ENCODE measurements at regions of chr17 and their contacts with region 1.

Region 1: GRCh38 chr17:12983991-12984884 is 33.6 kb downstream of the ELAC2 start:
- DNase-seq: peak in 1 of 2 donors; percentile 84
- H3K4me3 ChIP-seq: peak overlapping the region in 1 of 2 donors; percentile 26
- H3K27ac ChIP-seq: peak overlapping the region; percentile 9 to 44
- H3K4me1 ChIP-seq: peaks cover 0 to 29% (median 19%) of the 10 kb centered on the region in 4 donors
- H3K27me3 ChIP-seq: no peaks in the 10 kb centered on the region
- CTCF ChIP-seq: no peak

Region 2: GRCh38 chr17:12693640-12694039 is 290.6 kb before region 1 on chr17:
- intact Hi-C with region 1: no loop called
- DNase-seq: no peak
- H3K4me3 ChIP-seq: no peak overlapping the region
- H3K27ac ChIP-seq: peak overlapping the region; percentile 87 to 92
- H3K4me1 ChIP-seq: peaks cover 0 to 60% (median 7%) of the 10 kb centered on the region in 4 donors
- H3K27me3 ChIP-seq: no peaks in the 10 kb centered on the region
- CTCF ChIP-seq: no peak

Region 3: DNA sequence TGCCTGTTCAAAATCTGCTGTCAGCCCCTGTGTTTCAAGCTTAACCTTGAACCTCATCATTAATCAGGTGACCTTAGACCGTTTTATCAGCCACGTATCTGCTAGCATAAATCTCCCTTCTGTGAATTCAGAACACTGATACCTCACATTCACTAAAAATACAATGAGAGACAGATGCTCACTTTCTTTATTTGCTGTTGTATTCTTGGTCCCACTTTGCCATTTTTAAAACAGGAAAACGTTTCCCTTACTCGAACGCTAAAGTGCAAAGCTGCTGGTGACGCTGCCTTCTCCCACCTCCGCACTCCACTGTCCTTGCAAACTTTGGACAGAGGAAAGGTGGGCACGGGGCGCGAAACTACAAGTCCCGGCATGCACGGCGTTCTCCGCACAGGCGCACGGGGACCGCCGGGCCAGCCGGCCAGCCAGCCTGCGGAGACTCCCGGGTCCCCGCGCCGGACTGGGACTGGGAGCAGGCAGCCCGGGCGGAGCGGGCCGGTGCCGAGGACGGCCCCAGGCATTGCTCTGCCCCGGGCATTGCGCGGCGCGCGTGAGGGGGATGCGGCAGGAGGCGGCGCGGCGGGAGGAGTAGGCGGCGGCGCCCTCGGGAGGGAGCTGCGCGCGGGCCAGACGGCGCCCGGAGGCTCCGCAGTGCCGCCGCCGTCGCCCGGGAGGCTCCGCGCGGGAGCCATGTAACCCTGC is 195.0 kb before region 1 on chr17 and contains the start of gene ARHGAP44:
- intact Hi-C with region 1: loop called (anchors 10 kb)
- DNase-seq: peak; percentile 44 to 73
- H3K4me3 ChIP-seq: peak within 1 kb of the TSS; percentile 65 to 76
- H3K27ac ChIP-seq: peak within 1 kb of the TSS; percentile 55 to 67
- H3K4me1 ChIP-seq: peaks cover 0 to 15% (median 9%) of the 10 kb centered on the region in 4 donors
- H3K27me3 ChIP-seq: no peaks in the 10 kb centered on the region
- CTCF ChIP-seq: no peak